ENCODE measurements at regions of chr10 and their contacts with region 1.

Region 1: DNA sequence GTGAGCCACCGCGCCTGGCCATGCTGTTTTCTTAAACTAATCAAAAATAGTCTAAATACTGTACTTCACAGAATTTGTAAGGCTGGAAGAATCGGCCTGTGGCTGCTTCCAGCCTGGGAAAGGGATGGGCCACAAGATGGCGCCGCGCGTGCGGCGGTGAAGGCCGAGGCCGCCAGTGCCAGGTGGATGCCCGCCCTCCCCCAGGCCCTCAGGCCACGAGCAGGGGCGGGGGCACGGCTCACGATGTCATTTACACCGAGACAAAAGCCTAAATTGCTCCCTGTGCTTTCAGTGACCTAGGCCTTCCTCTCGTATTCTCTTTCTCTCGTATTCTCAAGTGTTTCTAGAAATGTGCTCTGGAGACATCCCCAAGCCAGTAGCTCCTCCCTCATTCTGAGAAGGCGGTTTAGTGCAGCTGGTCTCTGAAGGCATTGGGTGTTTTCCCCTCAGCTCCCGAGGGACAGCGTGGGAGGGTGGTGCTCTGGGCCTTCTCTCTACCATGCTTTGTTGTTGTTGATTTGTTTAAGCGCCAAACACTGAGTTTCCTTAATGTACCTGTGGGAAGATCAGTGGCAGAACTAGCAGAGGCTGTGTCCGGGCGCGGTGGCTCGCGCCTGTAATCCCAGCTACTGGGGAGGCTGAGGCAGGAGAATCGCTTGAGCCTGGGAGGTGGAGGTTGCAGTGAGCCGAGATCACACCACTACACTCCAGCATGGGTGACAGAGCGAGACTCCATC is 68.4 kb downstream of the CDC123 start:
- DNase-seq: peak; percentile 81

Region 2: GRCh38 chr10:12287772-12288171 is 23.4 kb after region 1 on chr10:
- CTCF ChIA-PET with region 1: no interaction called
- POLR2A ChIA-PET with region 1: no interaction called
- DNase-seq: no peak

Region 3: GRCh38 chr10:12656518-12657142 is 392.3 kb after region 1 on chr10:
- CTCF ChIA-PET with region 1: interaction called, 16 read pairs
- POLR2A ChIA-PET with region 1: interaction called, 3 read pairs
- DNase-seq: peak; percentile 45

Region 4: DNA sequence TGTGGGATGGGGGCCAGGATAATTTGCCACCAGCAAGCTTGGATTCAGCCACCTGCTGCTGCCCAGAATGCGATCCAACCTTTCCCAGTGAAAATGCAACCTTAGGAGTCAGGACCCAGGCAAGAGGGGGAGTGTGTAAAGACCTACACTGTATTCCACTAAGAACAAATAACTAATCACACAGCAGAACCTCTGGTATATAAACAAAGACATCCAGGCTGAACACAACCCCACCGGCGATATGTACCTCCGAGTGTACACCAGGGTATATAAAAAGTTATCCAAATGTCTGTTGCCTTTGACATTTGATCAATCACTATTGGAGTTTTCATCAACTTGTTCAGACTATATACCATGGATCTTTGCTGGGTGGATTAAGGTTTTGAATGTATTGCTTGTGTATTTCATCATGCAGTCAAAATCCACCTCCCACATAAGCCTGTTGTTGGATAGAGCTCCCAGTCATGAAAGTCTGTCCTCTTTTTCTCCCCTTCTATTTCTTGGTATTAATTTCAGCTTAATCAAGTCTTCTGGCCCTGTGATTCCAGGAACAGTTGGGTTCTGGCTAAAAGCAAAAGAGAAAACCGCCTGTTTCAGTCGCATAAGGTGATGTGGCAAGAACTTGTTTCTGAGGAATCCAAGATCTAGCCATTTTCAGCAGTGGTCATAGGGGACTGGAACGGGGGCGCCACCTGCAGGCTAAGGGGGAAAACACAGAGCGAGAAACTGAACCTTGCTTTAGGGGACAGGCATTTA is 446.4 kb after region 1 on chr10:
- CTCF ChIA-PET with region 1: interaction called, 14 read pairs
- POLR2A ChIA-PET with region 1: interaction called, 3 read pairs
- DNase-seq: peak; percentile 73

Measured in HEK293T (cell line).